Naive thymus-derived CD4-positive, alpha-beta T cell (primary cell): ENCODE measurements at regions of chr4 and their contacts with region 1.

Region 1: DNA sequence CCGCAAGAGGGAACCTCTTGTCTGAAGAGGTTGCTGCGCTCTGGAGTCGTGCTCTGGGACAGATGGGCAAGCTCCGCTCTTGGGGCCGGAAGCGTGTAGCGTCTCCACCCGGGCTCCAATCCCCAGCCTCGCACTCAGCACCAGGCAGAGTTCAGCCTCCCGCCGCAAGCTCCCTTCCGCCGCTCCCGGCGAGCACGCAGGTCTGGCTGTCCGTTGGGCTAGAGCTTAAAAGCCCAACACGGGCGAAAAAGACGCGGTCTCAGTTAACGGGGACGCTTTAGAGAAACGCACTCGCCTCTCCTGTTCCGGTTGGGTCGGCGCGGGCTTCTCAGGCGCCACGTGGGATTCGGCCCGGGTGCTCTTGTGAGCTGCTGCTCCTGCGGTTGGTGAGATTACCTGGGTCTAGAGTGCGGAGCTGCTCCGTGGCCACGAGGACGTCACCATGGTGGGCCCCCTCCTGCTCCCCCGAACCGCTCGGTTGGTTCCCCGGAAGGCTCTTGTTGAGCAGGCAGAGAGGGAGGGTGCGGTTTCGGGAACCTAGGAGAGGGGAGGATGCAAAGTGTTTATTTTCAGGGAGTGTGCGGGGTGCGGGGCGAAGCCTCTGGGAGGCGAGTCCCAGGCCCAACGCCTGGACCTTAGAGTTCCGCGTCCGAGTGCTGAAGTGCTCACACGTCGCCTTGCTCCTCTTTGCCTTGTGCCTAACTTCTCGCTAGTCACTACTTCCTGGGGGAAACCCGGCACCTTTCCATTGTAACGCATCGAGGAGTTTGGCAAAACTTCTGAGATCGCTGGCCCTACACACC is at the start of gene TMA16:
- DNase-seq: peak; percentile 56 to 87 (median 76)
- ATAC-seq: peak; percentile 89
- H3K4me3 ChIP-seq: peak within 1 kb of the TSS; percentile 94
- H3K4me3 Mint-ChIP-seq: peak within 1 kb of the TSS; percentile 92 to 100 (median 98)
- H3K27ac ChIP-seq: peak within 1 kb of the TSS; percentile 83
- H3K27ac Mint-ChIP-seq: peak within 1 kb of the TSS; percentile 78 to 99 (median 96)
- H3K4me1 ChIP-seq: peaks cover 7% of the 10 kb centered on the region in 2 donors
- H3K4me1 Mint-ChIP-seq: peaks cover 20 to 44% (median 36%) of the 10 kb centered on the region in 7 donors
- H3K27me3 ChIP-seq: no peaks in the 10 kb centered on the region
- H3K27me3 Mint-ChIP-seq: peaks cover 0 to 12% (median 5%) of the 10 kb centered on the region in 5 donors
- total RNA-seq, gene TMA16: 10.5 to 38.7 (median 20.7) TPM

Region 2: GRCh38 chr4:163166041-163166579 is 328.5 kb before region 1 on chr4:
- CTCF ChIA-PET with region 1: no interaction called
- POLR2A ChIA-PET with region 1: no interaction called
- intact Hi-C with region 1: loop called (anchors 1 kb)
- DNase-seq: peak; percentile 42 to 70 (median 63)
- ATAC-seq: peak; percentile 60
- H3K4me3 ChIP-seq: peak overlapping the region; percentile 69
- H3K4me3 Mint-ChIP-seq: peak overlapping the region; percentile 88 to 98 (median 92)
- H3K27ac ChIP-seq: peak overlapping the region; percentile 98
- H3K27ac Mint-ChIP-seq: peak overlapping the region; percentile 97 to 100 (median 99)
- H3K4me1 ChIP-seq: peaks cover 5 to 19% of the 10 kb centered on the region in 2 donors
- H3K4me1 Mint-ChIP-seq: peaks cover 28 to 67% (median 54%) of the 10 kb centered on the region in 7 donors
- H3K27me3 ChIP-seq: no peaks in the 10 kb centered on the region
- H3K27me3 Mint-ChIP-seq: no peaks in the 10 kb centered on the region